ENCODE measurements at regions of chr17 and their contacts with region 1.

Region 1: DNA sequence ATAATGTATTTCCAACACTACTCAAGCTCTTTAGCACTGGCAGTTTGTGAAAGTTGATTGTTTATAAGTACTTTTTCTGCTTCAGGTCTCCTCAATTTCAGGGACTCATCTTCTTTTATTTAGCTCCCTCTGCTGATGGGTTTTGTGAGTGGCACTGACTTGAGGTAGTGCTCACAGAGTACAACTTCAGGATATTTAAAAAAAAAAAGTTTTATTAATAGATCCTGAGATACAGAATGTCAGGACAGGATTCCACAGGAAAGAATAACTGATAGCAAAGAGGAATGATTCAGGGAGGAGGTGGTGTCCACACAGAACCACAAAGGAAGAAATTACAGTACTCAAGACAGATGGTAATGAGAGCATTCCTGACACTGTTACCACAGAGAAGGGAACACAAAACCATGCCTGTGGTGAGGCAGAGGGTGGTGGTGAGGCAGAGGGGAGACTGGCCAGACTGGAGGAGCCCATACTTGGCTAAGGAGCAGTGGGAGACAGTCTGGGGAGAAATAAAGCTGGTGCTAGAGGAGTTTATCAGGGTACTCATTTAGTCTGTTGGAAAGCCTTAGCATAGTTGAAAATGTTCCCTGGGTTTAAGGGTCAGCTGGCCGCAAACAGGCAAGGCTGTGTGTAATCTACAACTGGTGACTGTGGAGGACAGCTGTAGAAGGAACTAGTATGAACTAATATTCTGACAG is 63.7 kb downstream of the SPAG9 start:
- DNase-seq: peak; percentile 59 to 77 (median 65)
- H3K4me3 ChIP-seq: no peak overlapping the region
- H3K27ac ChIP-seq: peak overlapping the region; percentile 65 to 85 (median 74)
- H3K4me1 ChIP-seq: peaks cover 20 to 27% of the 10 kb centered on the region in 2 donors
- H3K27me3 ChIP-seq: no peaks in the 10 kb centered on the region
- CTCF ChIP-seq: peak; percentile 48 to 75 (median 66)
- POLR2A ChIP-seq: peak in 1 of 2 donors; percentile 38

Region 2: DNA sequence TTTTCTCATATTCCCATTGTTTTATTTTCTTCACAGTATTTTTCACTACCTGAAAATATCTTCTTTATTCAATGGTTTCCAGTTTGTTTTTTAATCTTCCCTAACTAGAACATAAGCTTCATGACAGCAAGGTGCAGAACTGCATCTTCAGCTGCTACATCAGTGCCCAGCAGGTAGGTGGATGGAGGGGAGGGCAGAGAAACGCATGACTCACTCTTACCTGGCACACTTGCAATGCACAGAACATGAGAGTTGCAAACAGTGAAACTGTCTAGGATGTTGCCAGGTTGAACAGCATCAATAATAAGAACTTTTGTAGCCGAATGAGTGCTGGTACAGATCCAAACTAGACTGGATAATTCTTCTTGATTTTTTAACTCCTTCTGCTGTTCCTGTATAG is 63.4 kb before region 1 on chr17:
- intact Hi-C with region 1: no loop called
- DNase-seq: no peak
- H3K4me3 ChIP-seq: no peak overlapping the region
- H3K27ac ChIP-seq: no peak overlapping the region
- H3K4me1 ChIP-seq: no peaks in the 10 kb centered on the region
- H3K27me3 ChIP-seq: no peaks in the 10 kb centered on the region
- CTCF ChIP-seq: no peak
- POLR2A ChIP-seq: no peak

Region 3: DNA sequence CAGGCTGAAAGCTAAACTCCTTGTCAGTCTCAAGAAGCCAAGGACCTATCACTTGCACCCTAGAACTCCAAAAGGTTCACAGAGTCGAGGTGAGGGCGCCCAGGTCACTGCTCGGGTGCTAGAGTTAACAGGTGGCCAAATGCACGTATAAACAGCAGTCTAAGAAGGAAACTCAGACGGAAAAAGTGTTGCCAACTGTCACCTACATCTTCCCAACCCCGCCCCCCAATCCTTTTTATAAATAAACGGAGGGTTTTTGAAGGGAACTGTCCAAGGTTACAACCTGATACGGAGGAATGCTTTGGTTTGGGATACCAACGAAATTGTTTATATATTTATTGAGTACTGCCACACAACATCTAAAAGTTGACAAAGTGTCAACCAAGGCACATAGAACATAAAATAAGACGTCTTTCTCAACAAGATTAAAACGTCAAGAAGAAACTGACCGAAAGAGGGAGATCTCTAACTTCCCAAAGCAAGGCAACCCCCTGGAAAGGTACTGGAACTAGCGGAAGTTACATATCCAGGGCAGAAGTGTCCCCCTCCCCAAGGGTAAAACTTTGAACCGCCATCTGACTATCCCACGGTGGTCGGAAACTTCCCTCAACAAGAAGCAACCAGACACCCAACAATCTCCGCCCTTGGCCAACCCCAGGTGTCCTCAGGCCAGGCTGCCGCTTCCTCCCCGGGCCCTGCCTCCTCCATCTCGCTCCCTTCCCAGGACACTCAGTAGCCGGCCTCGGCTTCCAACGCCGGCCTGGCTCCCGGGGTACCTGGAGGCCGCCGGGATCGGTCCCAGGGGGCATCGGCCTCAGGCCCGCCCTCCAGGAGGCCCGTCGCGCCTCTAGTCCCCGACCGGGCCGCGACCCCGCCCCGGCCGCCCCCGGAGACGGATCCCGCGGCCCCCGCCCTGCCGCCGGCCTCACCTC is 62.7 kb after region 1 on chr17:
- intact Hi-C with region 1: loop called in 1 of 2 experiments (anchors 10 kb)
- DNase-seq: peak; percentile 52 to 80 (median 58)
- H3K4me3 ChIP-seq: peak overlapping the region; percentile 38 to 84 (median 56)
- H3K27ac ChIP-seq: peak overlapping the region; percentile 96 to 100 (median 99)
- H3K4me1 ChIP-seq: peaks cover 26 to 29% of the 10 kb centered on the region in 2 donors
- H3K27me3 ChIP-seq: no peaks in the 10 kb centered on the region
- CTCF ChIP-seq: peak in 4 of 6 experiments; percentile 20 to 26 (median 20)
- POLR2A ChIP-seq: peak in 1 of 2 donors; percentile 16